ENCODE measurements at regions of chrX and their contacts with region 1.

Region 1: DNA sequence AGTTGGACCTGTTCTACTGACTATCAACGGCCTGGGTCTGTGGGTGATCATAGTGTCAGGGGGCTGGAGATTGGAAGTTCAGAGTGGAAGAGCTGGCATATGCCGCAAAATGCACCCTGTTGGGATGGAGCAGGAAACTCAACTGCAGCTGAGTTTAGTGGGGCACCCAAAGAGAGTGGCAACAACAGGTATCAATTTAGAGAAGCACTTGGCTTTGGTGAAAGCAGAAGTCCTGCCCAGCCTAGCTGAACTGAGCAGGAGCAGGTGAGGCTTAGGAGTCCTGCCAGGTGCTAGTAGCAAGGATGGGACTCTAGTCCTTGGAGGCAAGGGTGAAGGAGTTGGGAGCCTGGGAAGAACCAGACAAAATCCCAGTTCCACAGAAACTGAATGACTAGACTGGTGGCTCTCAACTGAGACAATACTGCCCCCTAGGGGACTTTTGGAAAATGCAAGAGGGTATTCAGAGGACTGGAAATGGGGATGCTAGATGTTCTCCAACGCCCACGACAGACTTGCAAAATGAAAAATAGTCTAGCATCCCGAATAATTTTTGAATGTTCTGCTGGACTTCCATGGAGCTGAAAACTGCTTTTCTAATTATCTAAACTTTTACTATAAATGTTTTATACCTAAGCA is 49.4 kb downstream of the RTL9 start:
- DNase-seq: peak; percentile 23
- CTCF ChIP-seq: peak; percentile 67

Region 2: DNA sequence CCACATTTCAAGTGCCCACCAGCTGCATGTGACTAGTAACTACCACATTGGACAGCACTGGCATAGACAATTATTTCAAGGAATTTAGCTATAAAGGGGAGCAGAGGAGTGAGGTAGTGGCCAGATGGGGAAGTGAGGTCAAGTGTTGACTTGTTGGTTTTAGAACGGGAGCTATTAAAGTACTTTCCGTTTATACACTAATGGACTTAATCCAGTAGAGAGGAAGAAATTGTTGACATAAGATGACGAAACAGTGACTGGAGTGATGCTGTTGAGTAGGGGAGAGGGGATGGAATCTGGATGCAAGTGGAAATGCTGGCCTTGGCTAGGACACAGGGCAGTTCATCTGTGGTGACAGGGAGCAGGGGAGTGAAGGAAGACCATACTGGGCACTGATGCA is 244.5 kb before region 1 on chrX:
- in situ Hi-C with region 1: loop called (anchors 5 kb)
- DNase-seq: no peak
- CTCF ChIP-seq: no peak

Region 3: DNA sequence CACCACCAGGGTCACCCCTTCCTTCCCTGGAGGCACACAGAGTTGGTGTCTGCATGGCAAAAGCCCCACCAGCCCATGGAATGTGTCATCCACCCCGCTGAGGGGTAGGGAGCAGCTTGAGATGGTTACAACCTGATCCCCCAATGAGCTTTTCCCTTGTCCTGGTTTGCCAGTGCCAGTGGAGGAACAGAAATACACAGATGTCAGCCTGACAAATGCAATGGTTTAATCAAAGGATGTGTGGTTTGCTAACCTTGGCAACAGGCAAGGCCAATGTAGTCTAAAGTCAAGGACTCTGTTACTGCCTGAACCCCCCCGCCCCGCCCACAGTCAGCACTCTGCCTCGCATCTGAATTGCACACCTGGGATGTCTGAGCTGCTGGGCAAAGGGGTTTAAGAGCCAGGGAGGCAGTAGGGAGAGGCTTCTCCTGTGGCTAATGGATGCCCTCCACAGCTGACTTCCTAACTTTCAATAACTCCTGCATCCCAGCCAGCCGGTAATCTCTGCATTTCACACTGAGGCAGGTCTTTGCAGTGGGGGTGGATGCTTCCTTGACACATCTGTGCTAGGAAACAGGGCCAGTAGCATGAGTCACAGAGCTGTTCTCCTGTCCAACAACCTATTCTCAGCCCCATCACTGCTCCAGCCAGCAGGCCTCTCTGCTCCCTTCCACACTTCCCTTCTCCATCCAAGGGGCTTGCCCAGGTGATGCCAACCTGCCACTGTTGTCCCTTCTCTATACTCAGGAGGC is 227.7 kb before region 1 on chrX:
- in situ Hi-C with region 1: no loop called
- DNase-seq: no peak
- CTCF ChIP-seq: no peak